Activated CD8-positive, alpha-beta T cell treated with anti-CD3 and anti-CD28 coated beads for 36 hours (primary cell): ENCODE measurements at regions of chr1 and their contacts with region 1.

Region 1: DNA sequence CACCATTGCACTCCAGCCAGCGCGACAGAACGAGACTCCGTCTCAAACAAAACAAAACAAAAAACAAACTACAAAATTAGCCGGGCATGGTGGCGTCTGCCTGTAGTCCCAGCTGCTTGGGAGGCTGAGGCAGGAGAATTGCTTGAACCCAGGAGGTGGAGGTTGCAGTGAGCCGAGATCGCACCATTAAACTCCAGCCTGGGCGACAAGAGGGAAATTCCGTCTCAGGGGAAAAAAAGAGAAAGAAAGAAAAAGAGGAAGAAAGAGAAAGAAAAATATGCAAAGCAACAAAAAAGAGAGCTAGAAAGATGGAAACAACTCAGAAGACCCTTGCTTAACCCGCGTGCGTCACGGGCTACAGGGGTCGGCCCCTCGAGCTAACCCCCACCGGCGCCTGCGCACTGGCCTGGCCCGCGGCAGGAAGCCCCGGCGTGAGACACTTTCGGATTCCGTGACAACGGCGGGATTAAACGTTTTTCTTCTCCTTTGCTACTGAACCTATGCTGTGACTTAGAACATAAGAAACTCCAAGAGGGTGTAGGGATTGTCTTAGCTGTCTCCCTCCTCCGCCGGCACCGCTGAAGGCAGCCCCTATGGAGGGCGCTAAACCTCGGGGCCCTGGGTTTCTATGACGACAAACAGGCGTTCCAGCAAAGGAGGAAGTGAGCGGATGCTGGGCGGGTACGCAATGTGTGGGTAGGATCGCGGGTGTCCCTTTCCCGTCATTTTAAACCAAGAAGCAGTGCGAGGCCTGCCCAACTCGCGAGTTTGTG is at the start of gene AXDND1:
- DNase-seq: peak; percentile 92
- ATAC-seq: peak; percentile 92
- H3K4me3 Mint-ChIP-seq: peak within 1 kb of the TSS; percentile 93
- H3K27ac Mint-ChIP-seq: peak within 1 kb of the TSS; percentile 100
- H3K4me1 Mint-ChIP-seq: peaks cover 9% of the 10 kb centered on the region
- H3K27me3 Mint-ChIP-seq: no peaks in the 10 kb centered on the region
- CTCF ChIP-seq: no peak
- total RNA-seq, gene AXDND1: 0.27 to 1.5 TPM

Region 2: GRCh38 chr1:179081687-179082332 is 283.7 kb before region 1 on chr1 and contains the start of gene TOR3A:
- CTCF ChIA-PET with region 1: interaction called, 70 read pairs
- POLR2A ChIA-PET with region 1: interaction called, 4 read pairs
- intact Hi-C with region 1: loop called (anchors 1 kb)
- DNase-seq: peak; percentile 88
- ATAC-seq: peak; percentile 73
- H3K4me3 Mint-ChIP-seq: peak within 1 kb of the TSS; percentile 99
- H3K27ac Mint-ChIP-seq: peak within 1 kb of the TSS; percentile 95
- H3K4me1 Mint-ChIP-seq: peaks cover 27% of the 10 kb centered on the region
- H3K27me3 Mint-ChIP-seq: no peaks in the 10 kb centered on the region
- CTCF ChIP-seq: no peak
- total RNA-seq, gene TOR3A: 28.8 to 30.3 TPM

Region 3: GRCh38 chr1:179121159-179121938 is 244.2 kb before region 1 on chr1:
- CTCF ChIA-PET with region 1: interaction called, 15 read pairs
- POLR2A ChIA-PET with region 1: no interaction called
- intact Hi-C with region 1: loop called (anchors 5 kb)
- DNase-seq: peak; percentile 65
- ATAC-seq: peak; percentile 56
- H3K4me3 Mint-ChIP-seq: no peak overlapping the region
- H3K27ac Mint-ChIP-seq: no peak overlapping the region
- H3K4me1 Mint-ChIP-seq: peaks cover 7% of the 10 kb centered on the region
- H3K27me3 Mint-ChIP-seq: no peaks in the 10 kb centered on the region
- CTCF ChIP-seq: peak; percentile 72

Region 4: DNA sequence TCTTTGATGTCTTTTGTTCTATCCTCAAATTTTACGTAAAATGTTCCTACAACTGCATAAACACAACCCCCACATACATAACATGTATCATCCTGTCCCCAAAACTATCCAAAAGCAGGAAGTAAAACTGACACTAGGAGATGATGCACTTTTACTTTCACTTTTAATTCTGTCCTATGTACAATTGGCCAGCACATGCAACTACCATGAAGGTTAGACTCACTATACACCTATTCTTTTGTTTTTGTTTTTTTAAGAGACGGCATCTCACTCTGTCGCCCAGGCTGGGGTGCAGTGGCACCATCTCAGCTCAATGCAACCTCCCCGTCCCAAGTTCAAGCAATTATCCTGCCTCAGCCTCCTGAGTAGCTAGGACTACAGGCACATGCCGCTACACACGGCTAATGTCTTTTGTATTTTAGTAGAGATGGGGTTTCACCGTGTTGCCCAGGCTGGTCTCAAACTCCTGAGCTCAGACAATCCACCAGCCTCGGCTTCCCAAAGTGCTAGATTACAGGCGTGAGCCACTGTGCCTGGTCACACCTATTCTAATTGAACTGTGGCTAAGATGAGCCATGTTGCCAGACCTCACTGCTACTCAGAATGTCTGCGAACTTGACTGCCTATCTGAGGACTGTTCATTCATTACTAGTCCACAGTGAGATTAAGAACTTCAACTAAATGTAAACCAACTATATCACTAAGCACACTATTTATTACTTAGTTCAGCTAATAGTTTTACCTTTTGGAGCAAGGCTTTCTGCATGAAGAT is 235.6 kb before region 1 on chr1:
- CTCF ChIA-PET with region 1: no interaction called
- POLR2A ChIA-PET with region 1: no interaction called
- intact Hi-C with region 1: loop called (anchors 5 kb)
- DNase-seq: peak; percentile 20
- ATAC-seq: peak; percentile 96
- H3K4me3 Mint-ChIP-seq: peak overlapping the region; percentile 71
- H3K27ac Mint-ChIP-seq: peak overlapping the region; percentile 98
- H3K4me1 Mint-ChIP-seq: peaks cover 31% of the 10 kb centered on the region
- H3K27me3 Mint-ChIP-seq: no peaks in the 10 kb centered on the region
- CTCF ChIP-seq: no peak

Region 5: DNA sequence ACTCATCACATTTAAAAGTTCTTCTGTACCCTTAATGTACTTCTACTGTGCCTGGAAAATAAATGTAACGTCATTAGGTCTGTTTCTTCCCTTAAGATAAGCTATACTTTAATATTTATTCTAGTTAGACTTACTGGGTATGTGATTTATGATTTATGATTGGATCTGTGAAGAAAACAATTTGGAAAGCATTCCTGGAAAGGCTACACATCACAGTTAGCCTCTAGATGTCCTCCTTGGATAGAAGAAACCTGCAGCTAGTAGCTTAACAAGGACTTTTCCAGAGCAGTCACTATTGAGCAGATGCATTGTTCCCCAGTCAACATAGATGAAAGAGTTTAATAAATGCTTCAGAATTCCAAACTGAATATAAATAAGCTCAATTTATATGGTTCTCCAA is 113.8 kb before region 1 on chr1:
- CTCF ChIA-PET with region 1: interaction called, 21 read pairs
- POLR2A ChIA-PET with region 1: no interaction called
- intact Hi-C with region 1: loop called (anchors 2 kb)
- DNase-seq: no peak
- ATAC-seq: peak; percentile 42
- H3K4me3 Mint-ChIP-seq: no peak overlapping the region
- H3K27ac Mint-ChIP-seq: no peak overlapping the region
- H3K4me1 Mint-ChIP-seq: no peaks in the 10 kb centered on the region
- H3K27me3 Mint-ChIP-seq: no peaks in the 10 kb centered on the region
- CTCF ChIP-seq: peak; percentile 12

Region 6: DNA sequence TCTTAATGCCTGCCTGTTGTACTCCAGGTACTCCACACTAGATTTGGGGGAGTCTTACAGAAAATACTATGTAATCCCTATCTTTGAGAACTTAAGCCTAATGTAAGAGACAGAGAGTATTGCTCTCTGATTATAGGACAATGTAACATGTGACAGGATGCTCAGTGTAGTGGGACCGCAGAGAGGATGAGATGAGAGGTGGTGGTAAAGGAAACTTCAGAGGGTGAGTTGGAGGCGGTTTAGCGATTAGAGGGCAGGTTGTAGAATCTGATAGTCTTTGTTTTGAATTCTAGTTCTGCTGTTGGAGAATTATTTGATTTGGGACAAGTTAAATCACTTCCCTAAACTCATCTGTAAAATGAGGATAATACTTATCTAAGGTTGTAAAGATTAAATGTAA is 66.6 kb before region 1 on chr1:
- CTCF ChIA-PET with region 1: interaction called, 5 read pairs
- POLR2A ChIA-PET with region 1: interaction called, 3 read pairs
- intact Hi-C with region 1: loop called (anchors 5 kb)
- DNase-seq: peak; percentile 79
- ATAC-seq: peak; percentile 86
- H3K4me3 Mint-ChIP-seq: peak overlapping the region; percentile 14
- H3K27ac Mint-ChIP-seq: peak overlapping the region; percentile 88
- H3K4me1 Mint-ChIP-seq: peaks cover 62% of the 10 kb centered on the region
- H3K27me3 Mint-ChIP-seq: no peaks in the 10 kb centered on the region
- CTCF ChIP-seq: no peak

Region 7: GRCh38 chr1:179380299-179380698 is 14.8 kb after region 1 on chr1:
- CTCF ChIA-PET with region 1: no interaction called
- POLR2A ChIA-PET with region 1: no interaction called
- intact Hi-C with region 1: no loop called
- DNase-seq: no peak
- ATAC-seq: no peak
- H3K4me3 Mint-ChIP-seq: no peak overlapping the region
- H3K27ac Mint-ChIP-seq: no peak overlapping the region
- H3K4me1 Mint-ChIP-seq: no peaks in the 10 kb centered on the region
- H3K27me3 Mint-ChIP-seq: peaks cover 2% of the 10 kb centered on the region
- CTCF ChIP-seq: no peak